Activated CD4-positive, alpha-beta memory T cell treated with anti-CD3 and anti-CD28 coated beads for 36 hours (primary cell): ENCODE measurements at regions of chr7 and their contacts with region 1.

Region 1: GRCh38 chr7:129218514-129219062 is 6.2 kb upstream of the AHCYL2 start:
- DNase-seq: peak; percentile 85
- H3K4me3 Mint-ChIP-seq: no peak overlapping the region
- H3K27ac Mint-ChIP-seq: no peak overlapping the region
- H3K4me1 Mint-ChIP-seq: peaks cover 9% of the 10 kb centered on the region
- H3K27me3 Mint-ChIP-seq: peaks cover 3% of the 10 kb centered on the region

Region 2: DNA sequence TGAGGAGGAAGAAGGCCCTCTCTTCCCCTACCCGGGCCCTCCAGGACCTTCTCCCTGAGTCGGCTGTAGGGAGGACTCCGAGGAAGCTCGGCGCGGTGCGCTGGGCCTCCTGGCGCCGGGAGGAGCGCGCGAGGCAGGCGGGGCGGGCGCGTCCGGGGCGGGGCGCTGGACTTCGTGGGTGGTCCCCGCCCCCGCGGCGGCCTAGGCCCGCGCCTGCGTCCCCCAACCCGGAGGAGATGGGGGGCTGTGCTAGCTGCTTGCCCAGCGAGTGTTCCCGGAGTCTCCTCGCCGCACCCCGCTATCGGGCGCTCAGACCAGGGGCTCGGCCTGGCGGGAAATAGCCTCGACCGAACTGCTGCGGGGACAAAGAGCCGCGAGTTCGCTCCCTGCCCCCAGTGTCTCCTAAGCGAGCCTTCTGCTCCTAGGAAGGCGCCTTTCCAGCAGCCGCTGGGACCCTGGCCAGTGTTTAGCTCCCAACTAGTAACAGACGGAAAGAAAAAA is 49.4 kb before region 1 on chr7:
- CTCF ChIA-PET with region 1: interaction called, 27 read pairs
- POLR2A ChIA-PET with region 1: no interaction called
- intact Hi-C with region 1: no loop called
- DNase-seq: peak; percentile 40
- H3K4me3 Mint-ChIP-seq: peak overlapping the region; percentile 57
- H3K27ac Mint-ChIP-seq: no peak overlapping the region
- H3K4me1 Mint-ChIP-seq: peaks cover 11% of the 10 kb centered on the region
- H3K27me3 Mint-ChIP-seq: peaks cover 15% of the 10 kb centered on the region

Region 3: GRCh38 chr7:129252128-129252527 is 33.5 kb after region 1 on chr7:
- CTCF ChIA-PET with region 1: interaction called, 14 read pairs
- POLR2A ChIA-PET with region 1: no interaction called
- intact Hi-C with region 1: no loop called
- DNase-seq: no peak
- H3K4me3 Mint-ChIP-seq: no peak overlapping the region
- H3K27ac Mint-ChIP-seq: no peak overlapping the region
- H3K4me1 Mint-ChIP-seq: peaks cover 1% of the 10 kb centered on the region
- H3K27me3 Mint-ChIP-seq: no peaks in the 10 kb centered on the region

Region 4: GRCh38 chr7:129271500-129272355 is 53.1 kb after region 1 on chr7:
- CTCF ChIA-PET with region 1: interaction called, 318 read pairs
- POLR2A ChIA-PET with region 1: interaction called, 3 read pairs
- intact Hi-C with region 1: loop called (anchors 1 kb)
- DNase-seq: peak; percentile 71
- H3K4me3 Mint-ChIP-seq: peak overlapping the region; percentile 54
- H3K27ac Mint-ChIP-seq: no peak overlapping the region
- H3K4me1 Mint-ChIP-seq: peaks cover 6% of the 10 kb centered on the region
- H3K27me3 Mint-ChIP-seq: no peaks in the 10 kb centered on the region

Region 5: DNA sequence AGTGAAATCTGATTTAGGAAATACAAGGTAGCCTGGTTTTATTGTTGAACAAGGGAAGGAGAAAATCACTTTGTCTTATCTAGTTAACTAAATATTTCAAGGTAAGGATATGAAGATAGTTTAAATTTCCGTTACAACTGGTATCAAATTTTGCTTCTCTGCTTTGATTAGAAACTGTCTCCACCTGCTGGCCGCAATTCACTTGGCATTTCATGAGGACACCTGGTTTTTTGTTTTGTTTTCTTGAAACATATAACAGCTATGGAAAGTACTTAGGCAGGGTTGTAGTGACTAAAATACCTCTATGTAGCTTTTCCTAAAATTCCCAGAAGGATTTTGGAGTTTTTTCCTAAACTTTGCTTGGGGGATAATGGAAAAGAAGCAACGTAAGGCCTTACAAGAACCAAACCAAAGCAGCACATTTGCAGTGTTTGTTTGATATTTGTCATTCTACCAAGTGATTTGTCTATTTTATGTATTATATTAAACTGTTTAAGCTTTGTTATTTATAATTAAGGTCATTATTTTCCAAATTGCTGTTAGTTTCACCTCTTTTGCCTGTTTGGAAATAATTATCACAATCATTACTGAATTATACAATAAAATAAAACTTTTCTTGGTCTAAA is 79.8 kb after region 1 on chr7:
- CTCF ChIA-PET with region 1: interaction called, 88 read pairs
- POLR2A ChIA-PET with region 1: no interaction called
- intact Hi-C with region 1: loop called (anchors 1 kb)
- DNase-seq: peak; percentile 62
- H3K4me3 Mint-ChIP-seq: no peak overlapping the region
- H3K27ac Mint-ChIP-seq: no peak overlapping the region
- H3K4me1 Mint-ChIP-seq: peaks cover 2% of the 10 kb centered on the region
- H3K27me3 Mint-ChIP-seq: no peaks in the 10 kb centered on the region

Region 6: GRCh38 chr7:129376076-129376777 is 157.6 kb after region 1 on chr7:
- CTCF ChIA-PET with region 1: interaction called, 45 read pairs
- POLR2A ChIA-PET with region 1: no interaction called
- intact Hi-C with region 1: no loop called
- DNase-seq: peak; percentile 68
- H3K4me3 Mint-ChIP-seq: no peak overlapping the region
- H3K27ac Mint-ChIP-seq: no peak overlapping the region
- H3K4me1 Mint-ChIP-seq: peaks cover 25% of the 10 kb centered on the region
- H3K27me3 Mint-ChIP-seq: no peaks in the 10 kb centered on the region